Aorta (tissue), 5 donors: ENCODE measurements at regions of chr1 and their contacts with region 1.

Region 1: DNA sequence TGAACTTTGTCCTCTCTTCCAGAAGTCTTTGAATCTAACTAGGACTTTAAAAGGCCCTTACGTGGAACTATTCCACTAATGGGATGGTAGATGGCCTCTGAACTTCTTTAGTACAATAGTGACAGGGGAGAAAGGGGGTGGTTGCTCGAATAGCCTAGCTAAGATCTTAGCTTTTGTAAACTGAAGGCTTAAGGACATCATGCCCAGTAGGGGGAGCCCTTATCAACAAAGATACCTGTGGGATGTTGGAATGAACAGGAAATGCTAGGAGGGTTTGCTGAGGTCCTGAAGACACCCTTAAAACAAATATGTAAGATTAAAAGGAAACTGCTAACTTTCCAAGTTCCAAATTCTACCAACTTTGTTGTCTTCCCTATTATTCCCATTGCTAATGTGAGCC is 33.2 kb downstream of the NHLH2 start:
- DNase-seq: no peak
- ATAC-seq: no peak
- H3K4me3 ChIP-seq: no peak overlapping the region
- H3K27ac ChIP-seq: no peak overlapping the region
- H3K4me1 ChIP-seq: no peaks in the 10 kb centered on the region
- H3K27me3 ChIP-seq: no peaks in the 10 kb centered on the region

Region 2: GRCh38 chr1:115865704-115866380 is 58.1 kb after region 1 on chr1:
- intact Hi-C with region 1: no loop called
- DNase-seq: no peak
- ATAC-seq: no peak
- H3K4me3 ChIP-seq: no peak overlapping the region
- H3K27ac ChIP-seq: no peak overlapping the region
- H3K4me1 ChIP-seq: no peaks in the 10 kb centered on the region
- H3K27me3 ChIP-seq: no peaks in the 10 kb centered on the region

Region 3: GRCh38 chr1:115893615-115894014 is 85.9 kb after region 1 on chr1:
- intact Hi-C with region 1: no loop called
- DNase-seq: no peak
- ATAC-seq: no peak
- H3K4me3 ChIP-seq: no peak overlapping the region
- H3K27ac ChIP-seq: no peak overlapping the region
- H3K4me1 ChIP-seq: no peaks in the 10 kb centered on the region
- H3K27me3 ChIP-seq: no peaks in the 10 kb centered on the region

Region 4: DNA sequence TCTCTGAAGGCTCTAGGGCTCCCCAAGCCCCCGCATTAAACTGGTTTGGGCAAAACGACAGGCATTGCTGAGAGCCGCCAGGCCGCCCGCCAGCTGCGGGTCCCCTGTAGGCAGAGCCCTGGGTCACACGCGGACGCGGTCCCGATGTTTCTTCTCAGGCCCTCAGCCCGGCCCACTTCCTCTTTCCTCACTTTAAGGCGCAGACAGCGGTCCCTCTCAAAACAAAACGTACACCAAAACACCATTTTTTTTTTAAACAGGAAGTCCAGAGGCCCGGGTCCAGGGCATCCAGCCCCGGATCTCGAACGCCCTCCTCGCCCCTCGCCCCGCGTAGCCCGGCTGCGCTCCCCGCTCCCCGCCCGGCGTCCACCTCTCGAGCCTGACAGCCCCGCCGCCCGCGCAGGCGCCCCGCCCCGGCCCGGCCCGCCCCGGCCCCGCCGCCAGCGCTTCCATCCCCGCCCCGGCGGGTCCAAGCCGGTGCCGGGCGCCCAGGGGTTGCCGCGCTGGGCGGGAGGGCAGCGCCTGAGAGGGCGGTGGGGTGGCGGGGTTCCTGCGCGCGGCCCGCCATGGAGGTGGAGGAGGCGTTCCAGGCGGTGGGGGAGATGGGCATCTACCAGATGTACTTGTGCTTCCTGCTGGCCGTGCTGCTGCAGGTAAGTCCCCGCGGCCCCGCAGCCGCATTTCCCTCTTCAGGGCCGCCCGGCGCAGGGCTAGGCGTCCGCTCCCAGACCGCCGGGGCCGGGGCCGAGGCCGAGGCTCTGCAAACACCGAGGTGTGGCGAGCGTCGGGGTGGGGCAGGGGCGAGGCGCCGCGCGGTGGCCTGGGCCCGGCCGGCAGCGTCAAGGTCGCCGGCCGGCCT is 168.6 kb after region 1 on chr1 and contains the start of gene SLC22A15:
- intact Hi-C with region 1: loop called (anchors 2 to 5 kb)
- DNase-seq: peak; percentile 84 to 88
- ATAC-seq: peak; percentile 79
- H3K4me3 ChIP-seq: peak within 1 kb of the TSS; percentile 81 to 91
- H3K27ac ChIP-seq: no peak within 1 kb of the TSS
- H3K4me1 ChIP-seq: no peaks in the 10 kb centered on the region
- H3K27me3 ChIP-seq: no peaks in the 10 kb centered on the region
- total RNA-seq, gene SLC22A15: 6.6 to 6.8 TPM

Region 5: GRCh38 chr1:115980998-115981993 is 173.6 kb after region 1 on chr1:
- intact Hi-C with region 1: loop called (anchors 2 to 5 kb)
- DNase-seq: no peak
- ATAC-seq: peak; percentile 82
- H3K4me3 ChIP-seq: no peak overlapping the region
- H3K27ac ChIP-seq: no peak overlapping the region
- H3K4me1 ChIP-seq: no peaks in the 10 kb centered on the region
- H3K27me3 ChIP-seq: no peaks in the 10 kb centered on the region

Region 6: GRCh38 chr1:116498789-116499628 is 691.3 kb after region 1 on chr1:
- intact Hi-C with region 1: loop called in 1 of 2 experiments (anchors 10 kb)
- DNase-seq: no peak
- ATAC-seq: peak; percentile 82
- H3K4me3 ChIP-seq: no peak overlapping the region
- H3K27ac ChIP-seq: no peak overlapping the region
- H3K4me1 ChIP-seq: no peaks in the 10 kb centered on the region
- H3K27me3 ChIP-seq: no peaks in the 10 kb centered on the region